ENCODE measurements at regions of chr20 and their contacts with region 1.

Region 1: GRCh38 chr20:37564388-37565133 is 36.9 kb upstream of the BLCAP start:
- DNase-seq: peak in 3 of 4 donors; percentile 41 to 88 (median 56)
- ATAC-seq: peak; percentile 92
- H3K4me3 ChIP-seq: no peak overlapping the region
- H3K27ac ChIP-seq: no peak overlapping the region
- H3K4me1 ChIP-seq: peaks cover 0 to 11% of the 10 kb centered on the region in 2 donors
- H3K27me3 ChIP-seq: peaks cover 8 to 86% of the 10 kb centered on the region in 2 donors
- CTCF ChIP-seq: peak; percentile 81 to 94

Region 2: GRCh38 chr20:37316116-37316774 is 248.3 kb before region 1 on chr20:
- intact Hi-C with region 1: no loop called
- DNase-seq: peak in 1 of 4 donors; percentile 45
- ATAC-seq: peak; percentile 62
- H3K4me3 ChIP-seq: no peak overlapping the region
- H3K27ac ChIP-seq: peak overlapping the region; percentile 57 to 79
- H3K4me1 ChIP-seq: peaks cover 24 to 33% of the 10 kb centered on the region in 2 donors
- H3K27me3 ChIP-seq: no peaks in the 10 kb centered on the region
- CTCF ChIP-seq: no peak

Region 3: DNA sequence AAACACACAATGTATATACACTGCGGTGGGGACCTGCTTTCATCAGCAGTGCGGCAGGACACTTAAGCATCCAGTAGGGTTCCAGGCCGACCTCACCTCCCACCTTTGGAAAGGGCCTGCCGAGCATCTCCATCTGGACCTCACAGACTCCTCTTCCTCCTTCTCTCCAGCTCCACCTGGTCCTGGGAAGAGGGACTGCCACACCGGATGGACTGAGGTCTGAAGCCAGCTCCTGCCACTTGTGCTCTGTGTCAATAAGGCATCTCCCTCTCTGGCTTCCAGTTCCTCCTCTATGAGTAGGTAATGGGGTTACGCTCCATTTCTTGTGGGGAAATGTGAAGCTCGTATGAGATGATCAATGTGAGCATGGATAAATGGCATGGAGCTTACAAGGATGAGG is 62.6 kb before region 1 on chr20:
- intact Hi-C with region 1: no loop called
- DNase-seq: no peak
- ATAC-seq: no peak
- H3K4me3 ChIP-seq: no peak overlapping the region
- H3K27ac ChIP-seq: no peak overlapping the region
- H3K4me1 ChIP-seq: no peaks in the 10 kb centered on the region
- H3K27me3 ChIP-seq: no peaks in the 10 kb centered on the region
- CTCF ChIP-seq: no peak

Region 4: GRCh38 chr20:37990571-37991151 is 426.1 kb after region 1 on chr20:
- intact Hi-C with region 1: loop called in 1 of 2 experiments (anchors 10 kb)
- DNase-seq: peak; percentile 60 to 93 (median 88)
- ATAC-seq: peak; percentile 33
- H3K4me3 ChIP-seq: no peak overlapping the region
- H3K27ac ChIP-seq: peak overlapping the region; percentile 41 to 75
- H3K4me1 ChIP-seq: peaks cover 39 to 76% of the 10 kb centered on the region in 2 donors
- H3K27me3 ChIP-seq: no peaks in the 10 kb centered on the region
- CTCF ChIP-seq: no peak

Region 5: DNA sequence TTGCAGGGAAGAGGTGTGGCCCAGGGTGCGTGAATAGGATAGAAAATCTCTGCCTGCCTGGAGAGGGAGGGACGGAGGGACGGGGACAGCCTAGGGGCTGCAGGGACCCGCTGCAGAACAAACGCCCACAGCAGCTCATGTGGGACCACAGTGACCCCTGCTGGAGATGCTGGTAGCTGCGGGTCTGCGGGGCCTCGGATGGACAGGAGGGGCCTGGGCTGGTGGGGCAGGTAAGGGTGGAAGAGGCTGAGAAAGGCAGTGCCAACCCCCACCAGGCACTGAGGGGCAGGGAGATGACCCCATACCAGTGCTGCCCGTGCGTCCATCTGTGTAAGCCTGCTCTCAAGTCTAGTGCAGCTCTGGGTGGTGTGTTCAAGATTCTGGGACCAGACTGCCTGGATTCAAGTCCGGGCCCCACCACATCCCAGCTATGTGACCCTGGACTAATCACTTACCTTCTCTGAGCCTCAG is 656.6 kb after region 1 on chr20:
- intact Hi-C with region 1: loop called in 1 of 2 experiments (anchors 10 kb)
- DNase-seq: peak; percentile 69 to 91 (median 75)
- ATAC-seq: peak; percentile 86
- H3K4me3 ChIP-seq: no peak overlapping the region
- H3K27ac ChIP-seq: no peak overlapping the region
- H3K4me1 ChIP-seq: peaks cover 2 to 7% of the 10 kb centered on the region in 2 donors
- H3K27me3 ChIP-seq: no peaks in the 10 kb centered on the region
- CTCF ChIP-seq: peak; percentile 88 to 92

Measured in left lung (tissue), 14 donors.